Naive thymus-derived CD4-positive, alpha-beta T cell (primary cell): ENCODE measurements at regions of chr4 and their contacts with region 1.

Region 1: GRCh38 chr4:39044364-39044955 is 12.3 kb upstream of the TMEM156 start:
- DNase-seq: peak; percentile 82 to 98 (median 89)
- ATAC-seq: peak; percentile 92
- H3K4me3 ChIP-seq: peak overlapping the region; percentile 68
- H3K4me3 Mint-ChIP-seq: peak overlapping the region; percentile 86 to 97 (median 91)
- H3K27ac ChIP-seq: peak overlapping the region; percentile 82
- H3K27ac Mint-ChIP-seq: peak overlapping the region; percentile 66 to 99 (median 93)
- H3K4me1 ChIP-seq: peaks cover 28 to 32% of the 10 kb centered on the region in 2 donors
- H3K4me1 Mint-ChIP-seq: peaks cover 17 to 63% (median 55%) of the 10 kb centered on the region in 7 donors
- H3K27me3 ChIP-seq: no peaks in the 10 kb centered on the region
- H3K27me3 Mint-ChIP-seq: no peaks in the 10 kb centered on the region

Region 2: GRCh38 chr4:38856524-38857337 is 187.7 kb before region 1 on chr4 and contains the start of gene TLR6:
- CTCF ChIA-PET with region 1: no interaction called
- POLR2A ChIA-PET with region 1: no interaction called
- intact Hi-C with region 1: loop called (anchors 1 to 5 kb)
- DNase-seq: peak in 8 of 9 donors; percentile 37 to 90 (median 83)
- ATAC-seq: peak; percentile 83
- H3K4me3 ChIP-seq: peak within 1 kb of the TSS; percentile 14
- H3K4me3 Mint-ChIP-seq: peak within 1 kb of the TSS in 9 of 10 donors; percentile 62 to 81 (median 67)
- H3K27ac ChIP-seq: peak within 1 kb of the TSS; percentile 49
- H3K27ac Mint-ChIP-seq: peak within 1 kb of the TSS; percentile 76 to 93 (median 90)
- H3K4me1 ChIP-seq: peaks cover 0 to 26% of the 10 kb centered on the region in 2 donors
- H3K4me1 Mint-ChIP-seq: peaks cover 28 to 52% (median 46%) of the 10 kb centered on the region in 7 donors
- H3K27me3 ChIP-seq: no peaks in the 10 kb centered on the region
- H3K27me3 Mint-ChIP-seq: peaks cover 0 to 6% (median 0%) of the 10 kb centered on the region in 5 donors
- total RNA-seq, gene TLR6: 1.00 to 8.8 (median 1.9) TPM

Region 3: GRCh38 chr4:38948551-38948950 is 95.9 kb before region 1 on chr4:
- CTCF ChIA-PET with region 1: no interaction called
- POLR2A ChIA-PET with region 1: no interaction called
- intact Hi-C with region 1: loop called in 1 of 2 experiments (anchors 1 kb)
- DNase-seq: no peak
- ATAC-seq: no peak
- H3K4me3 ChIP-seq: no peak overlapping the region
- H3K4me3 Mint-ChIP-seq: no peak overlapping the region
- H3K27ac ChIP-seq: no peak overlapping the region
- H3K27ac Mint-ChIP-seq: peak overlapping the region in 5 of 9 donors; percentile 25 to 99 (median 91)
- H3K4me1 ChIP-seq: peaks cover 6 to 9% of the 10 kb centered on the region in 2 donors
- H3K4me1 Mint-ChIP-seq: peaks cover 4 to 44% (median 19%) of the 10 kb centered on the region in 7 donors
- H3K27me3 ChIP-seq: no peaks in the 10 kb centered on the region
- H3K27me3 Mint-ChIP-seq: peaks cover 0 to 3% (median 1%) of the 10 kb centered on the region in 5 donors

Region 4: DNA sequence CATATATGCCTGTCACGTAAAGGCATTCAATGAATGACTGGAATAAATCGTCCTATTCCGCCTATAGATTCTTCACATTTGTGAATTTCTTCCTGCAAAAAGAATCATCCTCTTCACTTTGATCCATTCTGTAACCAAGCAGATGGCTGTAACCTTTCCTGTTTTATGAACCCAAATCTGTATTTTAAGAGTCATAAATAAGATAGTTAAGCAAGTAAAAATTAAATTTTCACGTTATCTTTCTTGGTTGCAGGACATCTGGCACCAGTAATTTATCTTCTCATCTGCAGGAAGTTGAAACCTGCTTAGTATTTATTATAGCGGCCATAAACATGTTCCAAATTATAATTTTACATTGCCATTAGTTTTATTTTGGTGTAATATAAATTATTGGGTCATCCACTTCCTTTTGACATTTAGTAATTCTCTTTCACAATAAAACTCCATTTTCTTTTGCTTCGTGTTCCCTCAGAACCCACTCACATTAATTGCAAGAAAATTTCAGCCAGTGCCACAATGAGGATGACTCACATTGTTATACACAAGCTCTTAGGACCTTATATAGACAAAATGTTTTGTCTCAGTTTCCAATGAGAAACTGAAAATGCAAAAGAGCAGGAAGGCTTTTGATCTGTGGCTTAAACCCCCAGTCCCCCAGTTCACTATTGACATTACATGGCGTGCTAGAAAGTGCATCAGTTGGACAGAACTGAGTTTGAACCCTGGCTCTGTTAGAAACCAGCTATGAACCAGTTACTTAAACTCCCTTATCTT is 63.4 kb before region 1 on chr4:
- CTCF ChIA-PET with region 1: interaction called, 4 read pairs
- POLR2A ChIA-PET with region 1: no interaction called
- intact Hi-C with region 1: loop called in 1 of 2 experiments (anchors 2 kb)
- DNase-seq: no peak
- ATAC-seq: no peak
- H3K4me3 ChIP-seq: no peak overlapping the region
- H3K4me3 Mint-ChIP-seq: peak overlapping the region in 1 of 10 donors; percentile 50
- H3K27ac ChIP-seq: no peak overlapping the region
- H3K27ac Mint-ChIP-seq: peak overlapping the region in 2 of 9 donors; percentile 28 to 65
- H3K4me1 ChIP-seq: no peaks in the 10 kb centered on the region
- H3K4me1 Mint-ChIP-seq: peaks cover 2 to 55% (median 5%) of the 10 kb centered on the region in 7 donors
- H3K27me3 ChIP-seq: no peaks in the 10 kb centered on the region
- H3K27me3 Mint-ChIP-seq: no peaks in the 10 kb centered on the region

Region 5: GRCh38 chr4:39032218-39033085 is 12.0 kb before region 1 on chr4 and contains the start of gene TMEM156:
- CTCF ChIA-PET with region 1: interaction called, 3 read pairs
- POLR2A ChIA-PET with region 1: interaction called, 76 read pairs
- intact Hi-C with region 1: loop called (anchors 1 kb)
- DNase-seq: peak in 7 of 9 donors; percentile 59 to 77 (median 70)
- ATAC-seq: peak; percentile 93
- H3K4me3 ChIP-seq: peak within 1 kb of the TSS; percentile 61
- H3K4me3 Mint-ChIP-seq: peak within 1 kb of the TSS; percentile 65 to 89 (median 82)
- H3K27ac ChIP-seq: peak within 1 kb of the TSS; percentile 55
- H3K27ac Mint-ChIP-seq: peak within 1 kb of the TSS; percentile 19 to 93 (median 87)
- H3K4me1 ChIP-seq: peaks cover 29 to 45% of the 10 kb centered on the region in 2 donors
- H3K4me1 Mint-ChIP-seq: peaks cover 16 to 55% (median 44%) of the 10 kb centered on the region in 7 donors
- H3K27me3 ChIP-seq: no peaks in the 10 kb centered on the region
- H3K27me3 Mint-ChIP-seq: no peaks in the 10 kb centered on the region
- total RNA-seq, gene TMEM156: 8.6 to 36.4 (median 9.4) TPM

Region 6: GRCh38 chr4:39118034-39118658 is 73.7 kb after region 1 on chr4:
- CTCF ChIA-PET with region 1: no interaction called
- POLR2A ChIA-PET with region 1: no interaction called
- intact Hi-C with region 1: loop called in 1 of 2 experiments (anchors 5 kb)
- DNase-seq: peak in 1 of 9 donors; percentile 27
- ATAC-seq: no peak
- H3K4me3 ChIP-seq: no peak overlapping the region
- H3K4me3 Mint-ChIP-seq: peak overlapping the region in 9 of 10 donors; percentile 5 to 64 (median 55)
- H3K27ac ChIP-seq: no peak overlapping the region
- H3K27ac Mint-ChIP-seq: peak overlapping the region in 8 of 9 donors; percentile 6 to 91 (median 73)
- H3K4me1 ChIP-seq: peaks cover 7 to 8% of the 10 kb centered on the region in 2 donors
- H3K4me1 Mint-ChIP-seq: peaks cover 13 to 38% (median 23%) of the 10 kb centered on the region in 7 donors
- H3K27me3 ChIP-seq: no peaks in the 10 kb centered on the region
- H3K27me3 Mint-ChIP-seq: no peaks in the 10 kb centered on the region

Region 7: DNA sequence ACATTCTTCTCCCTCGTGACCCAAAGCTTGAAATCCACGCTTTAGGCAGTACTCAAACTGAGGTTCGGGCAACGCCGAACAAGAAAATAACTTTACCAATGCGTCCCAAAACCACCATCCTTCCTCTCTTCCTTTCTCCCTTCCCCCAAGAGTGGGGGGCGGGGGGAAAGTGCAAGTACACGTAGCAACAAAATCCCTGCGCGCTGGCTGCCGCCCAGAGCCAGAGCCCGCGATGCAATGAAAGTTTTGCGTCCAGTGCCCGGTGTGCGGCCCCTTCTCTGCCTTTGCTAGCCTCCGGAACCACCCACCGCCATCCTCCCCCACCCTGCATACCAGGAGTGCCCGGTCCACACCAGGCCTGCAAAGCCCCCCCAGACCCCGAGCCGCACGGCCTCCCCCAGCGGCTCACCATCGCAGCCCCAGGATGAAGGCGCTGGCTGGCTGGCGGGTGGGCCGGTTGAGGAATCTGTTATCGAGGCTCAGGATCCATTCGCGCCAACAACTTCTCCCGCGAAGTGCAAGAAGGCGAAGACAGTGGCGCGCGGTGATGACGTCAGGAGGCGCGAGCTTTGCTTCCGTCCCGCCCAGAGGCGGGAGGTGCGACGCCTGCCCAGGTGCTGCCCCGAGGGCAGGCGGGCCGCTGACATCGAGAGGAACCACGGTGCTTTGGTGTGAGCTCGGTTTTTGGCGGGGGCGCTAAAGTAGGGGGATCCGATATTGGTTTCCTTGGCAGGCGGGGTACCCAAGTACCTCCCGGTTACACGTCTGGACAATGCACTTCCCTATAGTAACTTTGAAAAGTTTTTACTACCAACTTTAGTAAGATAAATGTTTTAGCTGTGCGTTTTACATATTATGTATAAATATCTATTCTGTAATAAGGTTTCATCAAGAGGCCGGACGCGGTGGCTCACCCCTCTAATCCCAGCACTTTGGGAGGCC is 321.6 kb after region 1 on chr4 and contains the start of gene RFC1:
- CTCF ChIA-PET with region 1: no interaction called
- POLR2A ChIA-PET with region 1: no interaction called
- intact Hi-C with region 1: loop called in 1 of 2 experiments (anchors 1 kb)
- DNase-seq: peak; percentile 84 to 92 (median 91)
- ATAC-seq: peak; percentile 98
- H3K4me3 ChIP-seq: peak within 1 kb of the TSS; percentile 69
- H3K4me3 Mint-ChIP-seq: peak within 1 kb of the TSS; percentile 88 to 98 (median 94)
- H3K27ac ChIP-seq: peak within 1 kb of the TSS; percentile 84
- H3K27ac Mint-ChIP-seq: peak within 1 kb of the TSS; percentile 72 to 97 (median 92)
- H3K4me1 ChIP-seq: peaks cover 12 to 19% of the 10 kb centered on the region in 2 donors
- H3K4me1 Mint-ChIP-seq: peaks cover 33 to 59% (median 41%) of the 10 kb centered on the region in 7 donors
- H3K27me3 ChIP-seq: no peaks in the 10 kb centered on the region
- H3K27me3 Mint-ChIP-seq: no peaks in the 10 kb centered on the region
- total RNA-seq, gene RFC1: 62.4 to 66.4 (median 64.3) TPM